ENCODE measurements at regions of chr2 and their contacts with region 1.

Region 1: GRCh38 chr2:42828487-42829425 is 36.4 kb upstream of the HAAO start:
- DNase-seq: peak; percentile 49 to 96 (median 73)

Region 2: GRCh38 chr2:42944779-42945415 is 116.1 kb after region 1 on chr2:
- intact Hi-C with region 1: loop called (anchors 5 kb)
- DNase-seq: peak in 1 of 10 donors; percentile 64

Region 3: DNA sequence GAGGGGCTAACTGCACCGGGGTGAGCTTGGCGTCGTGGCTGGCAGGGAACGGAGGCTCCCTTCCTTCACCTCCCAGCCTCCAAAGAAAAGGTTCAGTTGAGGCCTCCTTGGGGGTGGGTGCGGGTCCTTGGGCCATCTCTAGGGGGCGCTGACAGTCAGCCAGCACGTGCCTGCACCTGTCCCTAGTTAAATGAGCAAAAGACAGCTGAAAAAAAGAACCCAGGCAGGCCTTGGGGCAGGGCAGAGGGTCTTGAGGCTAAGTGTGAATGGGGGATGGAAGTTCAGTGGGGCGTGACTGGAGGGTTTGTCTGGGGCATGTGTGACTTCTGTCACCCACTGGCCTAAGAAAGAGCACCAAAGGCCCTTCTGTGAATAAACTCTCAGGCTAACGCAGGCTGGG is 341.2 kb after region 1 on chr2:
- intact Hi-C with region 1: no loop called
- DNase-seq: peak in 1 of 10 donors; percentile 9

Region 4: DNA sequence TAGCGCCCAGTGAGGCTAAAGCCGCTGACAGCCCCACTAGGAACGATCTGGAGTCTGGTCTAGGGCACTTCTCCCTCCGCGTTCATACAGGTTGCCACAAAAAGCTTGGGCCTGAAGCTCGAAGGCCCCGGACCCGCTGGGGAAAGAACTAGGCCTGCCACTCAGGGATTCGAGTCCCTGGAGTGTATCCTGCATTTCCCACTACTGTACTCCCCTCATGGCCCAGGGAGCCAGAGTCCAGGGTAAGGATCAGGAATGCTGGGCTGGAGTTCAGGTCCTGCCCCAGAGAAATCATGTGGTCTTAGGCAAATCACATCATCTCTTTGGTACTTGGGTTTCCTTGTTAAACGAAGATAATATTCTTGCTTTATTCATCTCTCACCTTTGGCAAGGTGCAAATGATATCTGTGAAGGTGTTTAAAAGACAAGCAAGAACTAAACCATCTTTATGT is 399.1 kb after region 1 on chr2:
- intact Hi-C with region 1: loop called (anchors 1 kb)
- DNase-seq: no peak

Region 5: GRCh38 chr2:43542285-43542937 is 713.7 kb after region 1 on chr2:
- intact Hi-C with region 1: loop called (anchors 5 kb)
- DNase-seq: no peak

Region 6: GRCh38 chr2:43609290-43609937 is 780.7 kb after region 1 on chr2:
- intact Hi-C with region 1: loop called (anchors 5 kb)
- DNase-seq: peak in 1 of 10 donors; percentile 32